ENCODE measurements at regions of chr2 and their contacts with region 1.

Region 1: GRCh38 chr2:237572021-237572741 is 5.8 kb downstream of the PRLH start:
- DNase-seq: peak; percentile 34
- H3K4me3 ChIP-seq: no peak overlapping the region
- H3K27me3 ChIP-seq: no peaks in the 10 kb centered on the region
- CTCF ChIP-seq: peak; percentile 99

Region 2: DNA sequence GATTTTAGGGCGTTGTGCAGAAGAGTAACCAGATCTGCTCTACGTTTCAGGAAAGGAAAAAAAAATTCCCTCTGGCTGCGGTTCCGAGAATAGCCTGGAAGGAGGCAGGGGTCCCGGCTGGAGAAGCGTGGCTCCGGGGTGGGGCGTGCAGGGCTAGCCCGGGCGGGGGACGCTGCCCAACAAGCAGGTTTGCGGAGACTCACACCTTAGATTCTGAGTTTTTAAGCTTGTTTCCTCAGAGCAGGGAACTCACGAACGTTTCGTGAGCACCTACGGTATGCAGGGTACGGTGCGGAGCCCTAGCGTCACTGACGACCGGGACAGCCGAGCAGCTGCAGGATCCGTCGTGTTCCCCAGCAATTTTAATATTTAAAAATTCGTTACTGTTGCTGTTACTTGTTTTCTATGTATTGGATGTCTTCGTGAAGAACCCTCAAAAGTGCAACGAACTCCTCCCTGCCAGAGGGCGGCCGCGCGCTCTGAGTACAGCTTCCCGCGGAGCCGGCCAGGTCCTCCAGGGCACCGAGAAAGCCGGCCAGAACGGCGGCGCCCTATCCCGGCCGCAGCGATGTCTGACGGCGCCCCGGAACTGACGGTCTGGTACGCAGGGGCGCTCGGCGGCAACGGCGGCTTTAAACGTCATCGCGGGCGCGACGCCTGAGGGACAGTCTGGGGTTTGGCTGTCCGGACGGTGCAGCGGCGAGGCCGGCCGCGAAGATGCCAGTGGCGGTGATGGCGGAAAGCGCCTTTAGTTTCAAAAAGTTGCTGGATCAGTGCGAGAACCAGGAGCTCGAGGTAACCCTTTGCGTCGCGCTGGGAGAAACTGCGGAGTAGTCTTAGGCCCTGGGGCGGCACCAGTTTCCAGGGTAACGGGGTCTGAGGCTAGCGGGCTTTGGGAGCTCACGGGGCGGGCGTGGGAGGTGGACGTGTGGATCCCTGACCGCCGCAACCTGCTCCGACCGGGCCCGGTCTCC is 486.6 kb before region 1 on chr2 and contains the start of gene COPS8:
- CTCF ChIA-PET with region 1: interaction called, 23 read pairs
- POLR2A ChIA-PET with region 1: interaction called, 3 read pairs
- DNase-seq: peak; percentile 57
- H3K4me3 ChIP-seq: peak within 1 kb of the TSS; percentile 76
- H3K27me3 ChIP-seq: no peaks in the 10 kb centered on the region
- CTCF ChIP-seq: peak; percentile 34; the same call in 1 of the 2 replicates
- polyA plus RNA-seq, gene COPS8: 55.8 and 98.0 TPM in 2 replicates

Region 3: DNA sequence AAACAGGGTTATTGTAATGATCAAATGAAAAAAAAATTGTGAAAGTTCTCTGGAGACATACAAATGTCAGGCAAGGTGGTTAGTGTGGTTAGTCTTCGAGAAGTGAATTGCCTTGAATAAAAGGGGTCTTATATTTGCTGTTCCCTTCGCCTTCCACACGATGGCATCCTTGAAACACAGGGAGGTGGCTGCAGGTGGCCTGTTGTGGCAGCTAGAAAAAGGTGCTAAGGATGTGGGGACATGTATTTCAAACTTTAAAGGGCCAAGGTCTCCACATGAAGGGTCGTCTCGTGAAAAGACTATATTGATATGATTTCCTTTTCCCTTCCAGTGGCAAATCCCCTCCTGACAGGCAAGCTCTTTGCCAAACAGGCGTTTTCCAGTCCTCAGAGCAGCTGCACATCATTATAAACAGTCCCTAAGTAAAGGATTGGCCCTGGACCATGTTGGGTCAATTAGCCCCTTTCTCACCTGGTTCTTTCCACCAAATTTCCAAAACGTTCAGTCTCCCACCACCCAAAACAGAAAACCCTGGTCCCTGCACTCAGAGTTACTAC is 418.0 kb before region 1 on chr2:
- CTCF ChIA-PET with region 1: interaction called, 34 read pairs
- POLR2A ChIA-PET with region 1: no interaction called
- DNase-seq: no peak
- H3K4me3 ChIP-seq: no peak overlapping the region
- H3K27me3 ChIP-seq: no peaks in the 10 kb centered on the region
- CTCF ChIP-seq: peak; percentile 79

Region 4: DNA sequence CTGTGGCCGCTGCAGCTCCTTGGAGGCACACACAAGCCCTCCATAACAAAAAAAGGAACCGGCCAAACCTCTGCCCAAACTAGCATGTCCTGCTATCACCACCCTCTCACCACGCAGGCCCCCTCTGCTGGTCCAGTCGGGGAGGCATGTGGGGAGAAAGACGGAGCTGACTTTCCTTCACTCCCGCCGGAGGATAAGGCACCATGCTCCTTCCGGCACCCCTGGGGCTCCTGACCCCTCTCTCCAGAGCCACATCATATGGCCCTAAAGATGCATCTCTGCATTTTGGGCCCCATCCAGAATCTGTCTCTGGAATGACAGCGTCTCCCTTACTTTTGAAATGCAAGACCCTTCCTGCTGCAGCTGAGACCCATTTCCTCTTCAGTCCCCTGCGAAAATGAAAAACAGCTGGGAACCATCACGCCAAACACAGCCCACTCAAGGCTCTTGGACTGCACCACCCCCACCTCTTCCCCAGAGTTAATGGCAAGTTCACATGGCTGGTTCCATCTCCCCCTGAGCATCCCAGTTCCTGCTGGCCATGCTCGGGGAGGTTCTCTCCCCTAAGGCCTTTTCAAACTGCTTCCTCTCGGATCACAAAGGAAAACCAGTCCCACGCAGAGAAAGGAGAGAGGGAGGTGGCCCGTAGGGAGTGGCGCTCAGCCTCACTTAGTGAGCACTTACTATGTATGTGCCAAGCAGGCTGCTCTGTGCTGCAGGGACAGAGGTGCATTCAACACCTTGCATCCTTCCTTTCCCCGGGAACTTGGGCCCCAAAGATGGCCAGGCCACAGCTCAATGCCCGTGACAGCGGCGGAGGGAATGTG is 120.3 kb before region 1 on chr2:
- CTCF ChIA-PET with region 1: interaction called, 11 read pairs
- POLR2A ChIA-PET with region 1: no interaction called
- DNase-seq: no peak
- H3K4me3 ChIP-seq: no peak overlapping the region
- H3K27me3 ChIP-seq: no peaks in the 10 kb centered on the region
- CTCF ChIP-seq: peak; percentile 73

Region 5: DNA sequence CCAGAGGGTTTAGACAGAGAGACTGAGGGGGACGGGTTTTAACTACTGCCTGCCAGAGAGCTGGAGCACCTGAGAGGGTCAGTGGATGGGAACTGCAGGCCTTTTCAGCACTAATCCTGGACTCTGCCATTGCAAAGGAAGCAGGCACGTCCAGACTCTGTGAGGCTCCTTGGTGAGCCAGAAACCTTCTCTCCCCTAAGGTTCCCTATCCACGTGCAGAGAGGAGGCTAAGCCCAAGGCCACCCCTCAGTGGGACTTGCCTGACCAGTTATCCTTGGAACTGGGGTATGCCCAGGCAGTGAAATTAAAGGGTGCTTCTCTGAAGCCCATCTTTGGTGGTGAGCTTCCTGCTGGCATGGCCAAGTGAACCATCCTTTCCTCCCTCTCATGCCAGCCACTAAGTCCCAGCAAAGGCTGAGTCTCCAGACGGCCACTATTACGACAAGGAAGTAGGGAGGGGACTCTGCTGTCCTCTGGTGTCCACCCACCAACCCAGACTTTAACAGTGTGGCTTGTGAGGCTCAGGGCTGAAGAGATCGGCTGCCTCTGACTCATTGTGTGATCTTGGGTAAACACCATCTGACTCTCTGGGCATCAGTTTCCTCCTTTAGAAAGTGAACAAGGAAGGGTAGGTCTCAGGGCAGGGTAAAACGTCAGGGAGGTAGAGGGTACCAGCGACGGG is 89.0 kb before region 1 on chr2:
- CTCF ChIA-PET with region 1: interaction called, 10 read pairs
- POLR2A ChIA-PET with region 1: no interaction called
- DNase-seq: no peak
- H3K4me3 ChIP-seq: no peak overlapping the region
- H3K27me3 ChIP-seq: no peaks in the 10 kb centered on the region
- CTCF ChIP-seq: no peak

Region 6: GRCh38 chr2:237524631-237525030 is 47.5 kb before region 1 on chr2:
- CTCF ChIA-PET with region 1: interaction called, 15 read pairs
- POLR2A ChIA-PET with region 1: no interaction called
- DNase-seq: no peak
- H3K4me3 ChIP-seq: no peak overlapping the region
- H3K27me3 ChIP-seq: no peaks in the 10 kb centered on the region
- CTCF ChIP-seq: no peak

Region 7: GRCh38 chr2:237744613-237745249 is 172.6 kb after region 1 on chr2:
- CTCF ChIA-PET with region 1: interaction called, 11 read pairs
- POLR2A ChIA-PET with region 1: no interaction called
- DNase-seq: no peak
- H3K4me3 ChIP-seq: no peak overlapping the region
- H3K27me3 ChIP-seq: no peaks in the 10 kb centered on the region
- CTCF ChIP-seq: peak; percentile 99